BJ (cell line): ENCODE measurements at regions of chr22 and their contacts with region 1.

Region 1: DNA sequence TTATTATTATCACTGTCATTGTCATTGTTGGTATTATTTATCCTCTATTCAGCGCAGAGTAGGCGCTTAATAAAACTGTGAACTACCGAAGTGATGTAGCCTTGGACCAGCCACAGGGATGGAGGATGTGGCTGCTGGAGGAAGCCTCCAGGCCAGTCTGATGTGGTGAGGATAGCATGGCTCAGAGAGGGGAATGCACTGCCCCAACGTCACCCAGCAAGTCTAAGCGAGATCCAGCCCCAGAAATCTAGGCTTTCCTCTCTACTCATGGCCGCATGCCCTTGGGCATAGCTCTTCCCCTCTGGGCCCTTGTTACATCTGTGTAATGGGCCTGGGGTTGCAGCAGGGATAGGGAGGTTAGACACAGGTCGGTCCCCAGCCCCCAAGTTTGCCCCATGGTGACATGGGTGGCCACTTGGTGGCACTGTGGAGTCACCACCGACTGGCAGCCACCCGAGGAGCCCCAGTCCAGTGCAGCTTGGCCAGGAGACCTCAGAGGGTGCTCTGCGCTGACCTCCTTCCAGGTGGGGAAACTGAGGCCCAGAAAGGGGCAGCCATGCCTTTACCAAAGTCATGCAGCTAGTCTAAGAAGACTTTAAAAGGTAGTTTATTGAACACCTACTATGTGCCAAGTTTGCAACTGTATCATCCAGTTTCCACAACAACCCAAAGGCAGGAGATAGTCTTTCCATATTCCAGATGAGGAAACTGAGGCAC is 395.7 kb downstream of the MN1 start:
- DNase-seq: no peak
- H3K4me3 ChIP-seq: no peak overlapping the region
- H3K27me3 ChIP-seq: no peaks in the 10 kb centered on the region
- CTCF ChIP-seq: peak; percentile 83

Region 2: DNA sequence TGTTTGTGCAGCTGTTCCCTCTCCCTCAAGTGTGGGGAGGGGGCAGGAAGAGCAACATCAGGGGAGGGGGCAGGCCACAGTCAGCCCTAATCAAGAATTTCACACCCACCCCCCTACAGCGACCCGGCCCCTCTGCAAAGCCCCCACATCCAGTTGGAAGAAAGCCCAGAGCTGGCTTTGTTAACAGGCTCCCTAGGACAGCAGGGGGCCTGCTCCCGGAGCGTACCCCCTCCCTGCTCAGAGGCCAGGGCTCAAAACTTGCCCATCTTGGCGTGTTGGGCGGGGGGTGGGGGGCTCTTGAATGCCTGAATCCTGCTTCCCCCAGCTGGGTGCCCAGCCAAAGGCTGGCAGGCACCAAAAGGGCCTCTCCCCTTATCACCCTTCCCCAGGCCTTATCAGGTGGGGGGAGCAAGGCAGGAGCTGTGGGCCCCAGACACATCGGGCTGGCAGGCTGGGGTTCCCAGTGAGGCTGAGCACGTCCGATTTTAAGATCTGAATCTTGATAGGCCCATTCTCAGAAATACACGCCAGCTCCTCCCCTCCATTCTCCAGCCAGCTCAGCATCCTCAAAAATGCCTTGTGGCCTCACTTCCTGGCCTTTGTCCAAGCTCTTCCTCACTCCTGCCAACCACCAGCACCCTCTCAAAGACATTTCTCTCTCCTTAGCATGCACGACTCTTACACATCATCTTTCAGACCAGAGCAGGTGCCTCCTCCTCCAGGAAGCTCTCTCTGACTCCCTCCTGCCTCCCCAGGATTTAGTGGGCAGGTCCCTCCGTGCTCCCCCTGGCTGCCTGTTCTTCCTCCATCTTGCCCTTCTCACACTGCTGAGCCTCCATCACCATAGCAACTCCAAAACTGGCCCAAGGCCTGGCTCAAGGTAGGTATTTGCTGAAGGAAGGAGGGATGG is 10.9 kb after region 1 on chr22:
- CTCF ChIA-PET with region 1: interaction called, 14 read pairs
- POLR2A ChIA-PET with region 1: no interaction called
- DNase-seq: peak; percentile 40
- H3K4me3 ChIP-seq: no peak overlapping the region
- H3K27me3 ChIP-seq: peaks cover 6% of the 10 kb centered on the region
- CTCF ChIP-seq: no peak

Region 3: GRCh38 chr22:27668828-27669797 is 263.3 kb after region 1 on chr22:
- CTCF ChIA-PET with region 1: no interaction called
- POLR2A ChIA-PET with region 1: no interaction called
- DNase-seq: peak; percentile 7
- H3K4me3 ChIP-seq: no peak overlapping the region
- H3K27me3 ChIP-seq: no peaks in the 10 kb centered on the region
- CTCF ChIP-seq: no peak

Region 4: GRCh38 chr22:27804470-27805297 is 398.9 kb after region 1 on chr22:
- CTCF ChIA-PET with region 1: interaction called, 34 read pairs
- POLR2A ChIA-PET with region 1: no interaction called
- DNase-seq: no peak
- H3K4me3 ChIP-seq: no peak overlapping the region
- H3K27me3 ChIP-seq: 0 out of 2 replicates have a peak, but pooled peaks cover 4% of the 10 kb centered on the region
- CTCF ChIP-seq: peak; percentile 76